Gastrocnemius medialis (tissue), 4 donors: ENCODE measurements at regions of chr2 and their contacts with region 1.

Region 1: GRCh38 chr2:171433763-171434670 is at the starts of genes DCAF17 and METTL8:
- DNase-seq: peak; percentile 94
- ATAC-seq: peak; percentile 96 to 97
- H3K4me3 ChIP-seq: peak within 1 kb of the TSS; percentile 75 to 96 (median 83)
- H3K27ac ChIP-seq: peak within 1 kb of the TSS; percentile 90 to 99 (median 98)
- H3K4me1 ChIP-seq: peaks cover 12 to 21% of the 10 kb centered on the region in 2 donors
- H3K27me3 ChIP-seq: no peaks in the 10 kb centered on the region
- CTCF ChIP-seq: peak in 3 of 5 experiments; percentile 23 to 43 (median 39)
- POLR2A ChIP-seq: peak; percentile 75 to 77
- total RNA-seq, gene DCAF17: 5.2 to 22.8 (median 8.9) TPM
- total RNA-seq, gene METTL8: 10.3 to 22.0 (median 11.0) TPM

Region 2: DNA sequence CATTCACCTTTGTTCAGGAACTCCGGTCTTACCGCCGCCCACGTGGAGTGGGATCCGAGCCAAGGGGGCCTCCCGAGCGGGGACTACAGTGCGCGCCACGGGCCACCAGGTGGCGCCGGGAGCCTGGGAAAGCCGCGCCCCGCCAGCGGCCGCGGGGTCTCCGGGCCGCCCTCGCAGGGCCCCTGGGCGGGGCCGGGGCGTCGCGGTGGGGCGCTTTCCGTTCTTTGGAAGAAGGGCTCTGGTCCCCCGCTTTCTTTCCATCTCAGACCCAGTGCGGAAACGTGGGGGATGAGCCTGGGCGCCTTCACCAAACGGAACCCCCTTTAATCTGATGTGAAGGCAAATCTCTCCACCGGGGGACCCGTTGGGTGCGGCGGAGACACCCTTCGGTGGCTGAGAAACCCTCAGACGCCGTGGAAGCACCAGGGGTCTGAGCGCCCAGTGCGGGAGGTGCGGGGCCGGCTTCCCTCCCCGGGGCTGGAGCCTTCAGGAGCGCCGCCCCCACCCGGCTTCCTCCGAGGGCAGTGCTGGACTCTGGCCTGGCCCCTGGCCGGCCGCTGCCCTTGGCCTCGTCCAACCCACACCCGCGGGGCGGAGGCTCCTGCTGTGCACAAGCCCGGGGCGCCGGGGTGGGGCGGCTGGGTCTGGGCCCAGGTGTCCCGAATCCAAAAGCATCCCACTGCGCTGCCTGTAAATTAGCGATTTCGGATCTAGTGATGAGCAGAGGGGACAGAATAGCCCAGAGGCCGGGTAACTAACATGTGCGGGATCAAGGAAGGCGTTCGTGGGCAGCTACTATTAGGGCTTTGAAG is 460.3 kb before region 1 on chr2:
- in situ Hi-C with region 1: no loop called
- intact Hi-C with region 1: loop called (anchors 5 kb)
- DNase-seq: peak; percentile 61 to 72
- ATAC-seq: peak; percentile 93
- H3K4me3 ChIP-seq: peak overlapping the region; percentile 65 to 78 (median 74)
- H3K27ac ChIP-seq: peak overlapping the region; percentile 56 to 73 (median 64)
- H3K4me1 ChIP-seq: peaks cover 4 to 5% of the 10 kb centered on the region in 2 donors
- H3K27me3 ChIP-seq: no peaks in the 10 kb centered on the region
- CTCF ChIP-seq: peak; percentile 82 to 98 (median 97)
- POLR2A ChIP-seq: peak; percentile 11 to 13

Region 3: DNA sequence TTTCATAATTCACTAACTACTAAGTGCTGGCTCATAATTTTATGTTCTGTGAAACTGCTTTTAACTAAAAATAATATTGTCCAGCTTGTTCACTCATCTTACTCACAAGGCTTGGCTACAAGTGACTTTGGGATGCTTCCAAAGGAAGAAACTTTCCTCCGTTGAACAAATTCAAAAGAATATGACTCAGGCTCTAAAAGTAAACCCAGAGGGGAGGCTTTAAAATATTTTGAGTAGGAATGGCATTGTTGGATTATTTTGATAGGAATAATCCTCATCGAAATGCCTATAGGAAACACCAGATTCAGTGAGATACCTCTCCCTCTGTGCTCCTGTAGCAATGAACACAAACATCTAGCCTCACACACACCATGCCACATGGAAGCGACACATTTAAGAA is 248.1 kb before region 1 on chr2:
- in situ Hi-C with region 1: no loop called
- intact Hi-C with region 1: no loop called
- DNase-seq: no peak
- ATAC-seq: no peak
- H3K4me3 ChIP-seq: no peak overlapping the region
- H3K27ac ChIP-seq: no peak overlapping the region
- H3K4me1 ChIP-seq: no peaks in the 10 kb centered on the region
- H3K27me3 ChIP-seq: no peaks in the 10 kb centered on the region
- CTCF ChIP-seq: no peak
- POLR2A ChIP-seq: no peak

Region 4: DNA sequence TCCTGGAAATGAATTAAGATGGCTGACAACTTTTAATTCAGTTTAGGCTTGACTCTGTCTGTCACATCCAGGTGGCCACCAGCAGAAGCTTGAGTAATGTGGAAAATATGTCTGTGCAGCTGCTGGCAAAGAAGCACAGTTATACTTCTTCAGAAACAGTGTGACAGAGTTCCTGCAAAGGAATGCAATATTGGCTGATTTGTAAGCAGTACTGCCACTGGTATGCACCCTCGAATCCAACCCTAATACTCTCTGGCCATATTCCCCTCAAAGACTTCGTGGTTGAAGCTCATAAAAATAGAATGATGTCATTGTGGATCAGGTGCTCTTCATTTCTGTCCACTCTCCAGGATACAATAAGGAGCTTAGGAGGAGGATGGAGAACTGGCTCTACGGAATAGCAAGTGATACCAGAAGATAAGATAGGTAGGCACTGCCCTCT is 86.4 kb before region 1 on chr2:
- in situ Hi-C with region 1: no loop called
- intact Hi-C with region 1: no loop called
- DNase-seq: peak in 1 of 2 donors; percentile 23
- ATAC-seq: peak; percentile 50 to 75
- H3K4me3 ChIP-seq: no peak overlapping the region
- H3K27ac ChIP-seq: peak overlapping the region in 1 of 4 donors; percentile 12
- H3K4me1 ChIP-seq: peaks cover 7 to 14% of the 10 kb centered on the region in 2 donors
- H3K27me3 ChIP-seq: no peaks in the 10 kb centered on the region
- CTCF ChIP-seq: no peak
- POLR2A ChIP-seq: no peak

Region 5: GRCh38 chr2:171687287-171688128 is 253.5 kb after region 1 on chr2 and contains the start of gene DYNC1I2:
- in situ Hi-C with region 1: loop called in 1 of 4 experiments (anchors 25 kb)
- intact Hi-C with region 1: loop called (anchors 5 kb)
- DNase-seq: peak; percentile 87 to 89
- ATAC-seq: peak; percentile 99 to 100
- H3K4me3 ChIP-seq: peak within 1 kb of the TSS; percentile 85 to 95 (median 92)
- H3K27ac ChIP-seq: peak within 1 kb of the TSS; percentile 81 to 93 (median 88)
- H3K4me1 ChIP-seq: peaks cover 13 to 16% of the 10 kb centered on the region in 2 donors
- H3K27me3 ChIP-seq: no peaks in the 10 kb centered on the region
- CTCF ChIP-seq: peak in 1 of 5 experiments; percentile 41
- POLR2A ChIP-seq: peak; percentile 17 to 26
- total RNA-seq, gene DYNC1I2: 40.0 to 93.7 (median 59.3) TPM